ENCODE measurements at regions of chr10 and their contacts with region 1.

Region 1: GRCh38 chr10:114550756-114551635 is 107.1 kb downstream of the ABLIM1 start:
- ATAC-seq: peak in 4 of 8 experiments; percentile 21 to 55 (median 39)
- H3K4me3 ChIP-seq: no peak overlapping the region
- H3K27ac ChIP-seq: no peak overlapping the region
- H3K4me1 ChIP-seq: no peaks in the 10 kb centered on the region

Region 2: GRCh38 chr10:114181981-114182380 is 369.0 kb before region 1 on chr10:
- in situ Hi-C with region 1: no loop called
- ATAC-seq: peak in 1 of 8 experiments; percentile 53
- H3K4me3 ChIP-seq: no peak overlapping the region
- H3K27ac ChIP-seq: no peak overlapping the region
- H3K4me1 ChIP-seq: no peaks in the 10 kb centered on the region

Region 3: DNA sequence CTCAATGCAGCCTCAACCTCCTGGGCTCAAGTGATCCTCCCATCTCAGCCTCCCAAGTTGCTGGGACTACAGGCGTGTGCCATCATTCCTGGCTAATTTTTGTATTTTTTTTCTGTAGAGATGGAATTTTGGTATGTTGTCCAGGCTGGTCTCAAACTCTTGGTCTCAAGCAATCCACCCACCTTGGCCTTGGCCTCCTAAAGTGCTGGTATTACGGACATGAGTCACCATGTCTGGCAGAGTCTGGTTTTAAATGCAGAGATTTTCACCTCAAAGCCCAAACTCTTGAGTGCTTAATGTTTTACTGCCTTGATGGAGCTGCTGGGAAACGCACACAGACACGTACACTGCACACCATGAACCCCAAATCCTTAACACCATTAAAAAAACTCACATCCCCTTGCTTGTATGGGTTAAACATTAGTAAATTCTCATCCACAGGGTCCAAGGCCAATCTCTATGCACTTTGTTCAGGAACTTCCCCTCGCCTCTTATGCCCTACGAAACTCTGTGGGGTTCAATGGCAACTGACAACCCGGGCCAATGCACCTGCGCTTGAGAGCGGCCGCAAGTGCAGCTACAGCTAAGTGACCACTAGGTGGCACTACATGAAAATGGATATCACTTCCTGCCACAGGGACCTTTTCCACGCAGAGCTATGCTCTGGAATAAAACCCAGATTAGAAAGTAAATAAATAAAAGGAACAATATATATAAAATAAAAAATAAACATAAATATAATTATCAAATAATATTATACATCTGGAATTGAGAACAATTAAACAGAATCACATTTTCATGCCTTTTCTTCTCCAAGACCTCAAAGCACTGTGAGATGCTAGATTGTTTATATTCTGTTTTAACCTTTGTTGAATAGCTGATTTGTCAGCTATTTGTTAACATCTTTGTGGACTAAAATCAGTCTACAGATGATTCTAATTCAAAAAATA is 79.8 kb before region 1 on chr10:
- in situ Hi-C with region 1: loop called in 2 of 9 experiments (anchors 10 kb)
- ATAC-seq: peak; percentile 70 to 92 (median 85)
- H3K4me3 ChIP-seq: no peak overlapping the region
- H3K27ac ChIP-seq: no peak overlapping the region
- H3K4me1 ChIP-seq: no peaks in the 10 kb centered on the region

Region 4: DNA sequence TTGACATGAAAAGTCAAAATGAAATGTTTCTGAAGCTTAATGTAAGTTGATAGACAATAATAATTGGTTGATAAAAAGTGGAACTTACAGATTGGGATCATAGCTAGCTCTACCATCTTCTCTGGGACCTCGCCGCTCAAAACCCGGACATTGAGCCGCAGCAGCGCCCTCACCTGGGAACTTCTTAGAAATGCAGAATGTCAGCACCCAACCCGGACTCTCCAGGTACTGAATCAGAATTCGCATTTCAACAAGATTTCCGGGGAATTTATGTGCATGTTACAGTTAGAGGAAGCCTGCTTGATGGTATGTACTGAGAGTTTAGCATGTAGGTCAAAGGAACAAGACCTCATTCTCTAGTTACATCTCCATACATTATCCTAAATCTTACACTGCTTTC is 143.8 kb after region 1 on chr10:
- in situ Hi-C with region 1: loop called in 1 of 9 experiments (anchors 10 kb)
- ATAC-seq: peak in 3 of 8 experiments; percentile 29 to 77 (median 40)
- H3K4me3 ChIP-seq: no peak overlapping the region
- H3K27ac ChIP-seq: no peak overlapping the region
- H3K4me1 ChIP-seq: no peaks in the 10 kb centered on the region

Region 5: DNA sequence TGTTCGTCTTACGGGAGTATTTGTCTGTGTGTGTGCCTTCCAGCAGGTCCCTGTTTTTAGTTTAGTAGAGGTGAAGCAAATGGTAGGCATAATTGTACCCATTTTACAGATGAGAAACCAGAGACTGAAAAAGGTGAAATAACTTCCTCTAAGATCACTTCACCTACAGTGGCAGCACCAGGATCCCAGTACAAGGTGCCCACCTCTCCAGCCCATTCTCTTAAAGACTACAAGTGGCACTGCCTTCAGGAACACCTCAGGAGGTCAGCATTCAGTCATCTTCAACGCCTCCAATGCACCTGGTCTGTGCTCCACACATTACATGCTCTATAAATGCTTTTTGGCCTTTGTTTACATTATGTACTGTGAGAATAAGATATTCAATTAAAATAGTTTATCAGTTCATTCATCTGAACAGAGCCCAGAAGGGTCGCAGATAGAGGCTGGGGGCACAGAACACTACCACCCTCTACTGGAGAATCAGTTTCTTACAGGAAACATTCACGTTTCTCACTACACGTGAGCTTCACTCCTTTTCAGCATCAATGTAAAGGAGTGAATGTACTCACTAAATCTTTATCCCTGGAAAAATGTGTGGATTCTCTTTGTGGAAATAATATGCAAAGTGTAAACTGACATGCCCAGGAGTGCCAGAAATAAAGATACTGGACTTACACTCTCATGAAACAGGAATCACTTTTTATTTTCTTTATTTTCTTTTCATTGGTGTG is 152.5 kb after region 1 on chr10:
- in situ Hi-C with region 1: loop called in 3 of 9 experiments (anchors 10 to 25 kb)
- ATAC-seq: peak in 3 of 8 experiments; percentile 38 to 81 (median 44)
- H3K4me3 ChIP-seq: no peak overlapping the region
- H3K27ac ChIP-seq: no peak overlapping the region
- H3K4me1 ChIP-seq: peaks cover 0 to 7% of the 10 kb centered on the region in 2 donors

Region 6: GRCh38 chr10:114779803-114780609 is 229.0 kb after region 1 on chr10:
- in situ Hi-C with region 1: loop called in 3 of 9 experiments (anchors 10 to 25 kb)
- ATAC-seq: peak in 6 of 8 experiments; percentile 54 to 88 (median 76)
- H3K4me3 ChIP-seq: no peak overlapping the region
- H3K27ac ChIP-seq: no peak overlapping the region
- H3K4me1 ChIP-seq: no peaks in the 10 kb centered on the region

Region 7: DNA sequence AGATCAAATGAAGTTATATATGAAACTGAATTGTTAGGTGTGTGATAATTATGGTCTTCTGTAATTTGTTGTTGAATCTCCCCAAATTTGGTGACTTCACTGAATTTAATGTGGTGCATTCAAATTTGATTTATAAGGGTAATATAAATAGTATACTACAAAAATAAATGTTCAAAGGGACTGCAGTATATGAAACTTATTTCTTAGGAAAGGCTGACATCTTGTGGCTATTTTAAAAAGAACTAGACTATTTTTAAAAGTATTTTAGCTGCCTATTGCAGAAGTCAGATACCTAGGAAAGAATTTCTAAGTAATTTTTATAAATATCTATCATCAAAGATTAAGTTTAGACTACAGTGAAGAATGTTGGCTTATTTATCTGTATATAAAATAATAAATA is 578.8 kb after region 1 on chr10:
- in situ Hi-C with region 1: loop called in 1 of 9 experiments (anchors 25 kb)
- ATAC-seq: peak in 3 of 8 experiments; percentile 28 to 41 (median 37)
- H3K4me3 ChIP-seq: no peak overlapping the region
- H3K27ac ChIP-seq: no peak overlapping the region
- H3K4me1 ChIP-seq: no peaks in the 10 kb centered on the region

Measured in motor neuron (in vitro differentiated cells).